ENCODE measurements at regions of chr6 and their contacts with region 1.

Region 1: DNA sequence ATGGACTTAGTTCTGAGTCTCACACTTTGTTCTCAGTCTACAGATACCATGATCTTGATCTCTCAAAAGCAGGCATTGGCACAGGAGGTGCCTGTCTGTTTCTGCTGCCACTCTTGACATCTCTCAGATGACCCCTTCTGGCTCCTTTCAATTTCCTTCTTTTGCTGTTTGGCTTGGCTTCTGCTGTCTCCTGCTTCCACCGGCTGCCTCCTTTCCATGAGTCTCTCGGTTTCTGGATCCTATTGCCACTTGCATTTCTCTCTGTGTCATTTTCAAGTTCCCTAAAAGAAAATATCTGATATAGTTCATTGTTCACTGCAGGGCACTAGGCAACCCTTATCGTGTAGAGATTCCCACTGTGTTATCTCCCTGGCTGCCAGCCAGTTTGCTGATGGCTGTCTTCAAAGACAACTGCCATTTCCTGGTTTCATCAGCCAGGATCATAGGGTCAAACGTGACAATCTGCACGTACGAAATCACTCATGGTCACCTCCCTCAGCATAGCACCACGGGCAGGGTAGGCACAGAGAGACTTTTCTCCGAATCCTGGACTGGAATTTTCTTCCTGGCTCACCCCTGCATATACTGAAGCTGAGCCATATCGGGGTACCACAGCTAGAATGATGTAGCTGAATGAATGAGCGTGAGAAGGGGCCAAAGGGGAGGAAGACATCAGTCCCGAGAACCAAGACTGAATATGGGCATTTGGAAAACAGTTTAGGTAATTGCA is 144.6 kb upstream of the TMEM170B start:
- DNase-seq: no peak
- H3K4me3 ChIP-seq: no peak overlapping the region
- H3K27ac ChIP-seq: peak overlapping the region in 1 of 2 donors; percentile 55
- H3K4me1 ChIP-seq: peaks cover 0 to 25% of the 10 kb centered on the region in 2 donors
- H3K27me3 ChIP-seq: no peaks in the 10 kb centered on the region
- CTCF ChIP-seq: no peak

Region 2: GRCh38 chr6:11407414-11407813 is 14.5 kb after region 1 on chr6:
- intact Hi-C with region 1: loop called (anchors 2 kb)
- DNase-seq: no peak
- H3K4me3 ChIP-seq: no peak overlapping the region
- H3K27ac ChIP-seq: no peak overlapping the region
- H3K4me1 ChIP-seq: peaks cover 2 to 24% of the 10 kb centered on the region in 2 donors
- H3K27me3 ChIP-seq: no peaks in the 10 kb centered on the region
- CTCF ChIP-seq: no peak

Region 3: DNA sequence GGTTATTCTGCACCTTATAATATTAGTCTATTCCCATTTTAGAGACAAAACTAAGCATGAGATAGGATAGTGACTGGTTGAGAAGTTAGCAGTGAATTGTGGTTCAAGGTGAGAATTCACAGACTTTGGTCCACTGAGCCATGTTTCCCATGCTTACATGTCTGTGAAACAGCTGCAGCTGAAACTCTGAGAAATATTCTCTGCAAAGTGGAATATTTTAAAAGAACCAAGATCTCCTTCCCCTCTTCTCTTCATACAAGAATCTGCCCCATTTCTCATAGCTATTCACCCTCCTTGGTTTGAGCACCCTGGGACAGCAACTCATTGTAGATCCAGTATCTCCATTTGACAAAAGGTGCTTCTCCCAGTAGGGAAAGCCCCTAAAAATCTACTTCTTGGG is 74.4 kb after region 1 on chr6:
- intact Hi-C with region 1: no loop called
- DNase-seq: no peak
- H3K4me3 ChIP-seq: no peak overlapping the region
- H3K27ac ChIP-seq: no peak overlapping the region
- H3K4me1 ChIP-seq: no peaks in the 10 kb centered on the region
- H3K27me3 ChIP-seq: no peaks in the 10 kb centered on the region
- CTCF ChIP-seq: no peak

Measured in ascending aorta (tissue), 2 donors.